ENCODE measurements at regions of chr10 and their contacts with region 1.

Region 1: DNA sequence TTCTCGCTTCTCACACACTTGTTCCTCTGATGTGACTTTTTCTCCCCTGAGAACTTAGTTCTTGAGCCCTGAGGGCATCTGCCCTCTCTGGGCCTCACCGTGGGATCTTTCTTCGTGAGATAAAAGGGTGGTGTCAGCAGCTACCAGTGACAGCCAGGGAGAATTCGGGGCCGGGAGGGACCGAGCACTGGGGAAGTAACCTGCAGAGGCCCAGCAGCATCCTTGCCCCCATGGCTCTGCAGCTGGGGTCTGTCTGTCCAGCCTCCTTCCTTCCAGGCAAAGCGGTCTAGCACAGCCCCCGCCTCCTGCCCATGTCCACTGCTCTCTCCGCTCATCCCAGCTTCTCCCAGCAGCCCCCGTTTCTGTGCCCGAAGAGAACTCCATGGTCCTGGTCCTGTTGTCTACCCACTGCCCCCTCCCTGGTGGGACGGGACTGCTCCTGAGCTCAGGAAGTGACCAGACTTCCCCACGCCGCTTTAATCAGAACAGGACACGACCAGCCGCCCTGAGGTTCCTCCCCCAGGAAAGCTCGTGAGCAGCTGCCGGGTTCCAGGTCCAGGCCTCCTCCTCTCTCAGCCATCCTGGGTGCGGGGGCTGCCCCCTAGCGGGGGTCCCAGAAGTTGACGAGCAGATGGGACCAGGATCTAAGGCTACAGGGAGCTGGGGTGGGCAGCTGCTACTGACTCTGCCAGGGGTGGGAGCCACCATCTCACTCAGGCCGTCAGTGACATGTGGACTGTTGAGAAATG is 187.5 kb downstream of the WDR37 start:
- DNase-seq: peak; percentile 33

Region 2: GRCh38 chr10:1109795-1110673 is 133.6 kb before region 1 on chr10:
- CTCF ChIA-PET with region 1: interaction called, 15 read pairs
- POLR2A ChIA-PET with region 1: no interaction called
- DNase-seq: peak; percentile 69

Measured in HEK293T (cell line).